ENCODE measurements at regions of chr17 and their contacts with region 1.

Region 1: DNA sequence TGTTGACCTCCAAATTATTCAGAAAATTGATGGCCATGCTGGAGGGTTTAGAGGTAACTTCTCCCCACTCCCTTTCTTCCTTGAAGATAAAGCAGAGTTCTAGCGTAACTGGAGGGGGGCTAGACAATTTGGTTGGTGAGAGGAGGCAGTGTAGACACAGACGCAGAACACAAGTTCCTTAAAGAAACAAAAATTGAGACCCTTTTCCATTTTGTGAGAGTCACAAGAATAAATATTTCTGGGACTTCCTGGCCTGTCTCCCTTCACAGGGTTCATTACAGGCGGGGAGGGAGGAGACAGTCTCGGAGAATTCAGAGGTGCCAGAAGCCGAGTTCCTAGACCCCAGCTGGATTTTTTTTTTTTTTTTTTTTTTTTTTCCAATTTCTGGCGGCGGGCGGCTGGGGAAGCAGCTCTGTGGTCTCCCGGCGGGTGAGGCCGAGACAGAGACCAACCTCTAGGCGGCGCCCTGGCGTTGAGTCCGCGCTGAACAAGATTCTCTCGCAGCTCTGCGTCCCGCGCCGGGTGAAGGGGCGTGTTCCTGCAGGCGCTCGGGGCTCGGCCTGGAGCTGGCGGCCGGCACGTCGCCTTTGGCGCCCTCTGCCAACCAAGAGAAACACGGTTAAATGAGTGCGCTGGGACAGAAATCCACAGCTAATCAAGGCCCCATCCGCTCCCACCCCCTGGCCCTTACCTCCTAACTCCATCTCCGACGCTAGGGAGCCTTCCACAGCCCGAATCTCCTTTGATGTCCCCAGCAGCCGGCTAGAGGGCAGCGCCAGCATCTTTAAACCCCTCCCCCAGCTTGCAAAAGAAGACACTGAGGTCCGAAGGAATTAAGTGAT is 10.2 kb upstream of the HOXB9 start:
- DNase-seq: peak; percentile 87
- ATAC-seq: peak; percentile 72
- H3K4me3 Mint-ChIP-seq: no peak overlapping the region
- H3K27ac Mint-ChIP-seq: no peak overlapping the region
- H3K4me1 Mint-ChIP-seq: peaks cover 34% of the 10 kb centered on the region
- H3K27me3 Mint-ChIP-seq: peaks cover 88% of the 10 kb centered on the region

Region 2: GRCh38 chr17:48492401-48493298 is 143.7 kb before region 1 on chr17:
- CTCF ChIA-PET with region 1: no interaction called
- DNase-seq: peak; percentile 76
- ATAC-seq: peak; percentile 95
- H3K4me3 Mint-ChIP-seq: peak overlapping the region; percentile 46
- H3K27ac Mint-ChIP-seq: peak overlapping the region; percentile 24
- H3K4me1 Mint-ChIP-seq: peaks cover 35% of the 10 kb centered on the region
- H3K27me3 Mint-ChIP-seq: peaks cover 16% of the 10 kb centered on the region

Region 3: GRCh38 chr17:48610282-48611211 is 25.9 kb before region 1 on chr17 and contains the start of gene HOXB7:
- CTCF ChIA-PET with region 1: interaction called, 21 read pairs
- DNase-seq: peak; percentile 81
- ATAC-seq: peak; percentile 54
- H3K4me3 Mint-ChIP-seq: peak within 1 kb of the TSS; percentile 81
- H3K27ac Mint-ChIP-seq: peak within 1 kb of the TSS; percentile 22
- H3K4me1 Mint-ChIP-seq: peaks cover 35% of the 10 kb centered on the region
- H3K27me3 Mint-ChIP-seq: peaks cover 79% of the 10 kb centered on the region
- total RNA-seq, gene HOXB7: 1.7 TPM

Region 4: DNA sequence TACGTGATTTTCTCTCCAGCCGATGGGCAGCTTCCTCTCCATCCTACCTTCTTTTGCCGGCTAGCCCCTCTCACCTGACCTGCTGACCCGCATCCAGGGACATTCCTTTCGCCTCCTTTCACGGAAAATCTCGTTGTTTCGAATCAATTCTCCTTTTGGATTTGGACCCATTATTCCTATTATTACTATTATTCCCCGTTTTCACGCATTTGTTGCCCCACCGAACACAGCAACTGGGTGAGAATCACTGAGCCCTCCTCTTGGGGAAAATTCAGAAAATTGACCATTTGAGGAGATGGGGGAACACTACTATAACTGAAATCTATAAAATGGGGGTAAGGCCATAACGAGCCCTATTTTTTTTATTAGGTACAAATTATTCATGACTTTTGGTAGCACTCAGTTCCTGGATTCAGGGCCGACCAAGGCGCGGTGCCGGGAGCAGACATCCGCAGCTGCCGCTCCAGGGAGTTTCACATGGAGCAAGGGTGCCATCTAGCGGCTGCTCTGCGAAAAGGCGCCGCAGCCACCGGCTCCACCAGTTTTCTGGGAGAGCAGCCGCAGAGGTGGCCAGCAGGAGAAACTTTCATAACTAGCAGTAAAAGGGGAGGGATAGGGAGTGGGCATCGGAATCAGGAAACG is 18.0 kb before region 1 on chr17:
- CTCF ChIA-PET with region 1: interaction called, 190 read pairs
- DNase-seq: peak; percentile 86
- ATAC-seq: peak; percentile 76
- H3K4me3 Mint-ChIP-seq: peak overlapping the region; percentile 31
- H3K27ac Mint-ChIP-seq: peak overlapping the region; percentile 36
- H3K4me1 Mint-ChIP-seq: peaks cover 34% of the 10 kb centered on the region
- H3K27me3 Mint-ChIP-seq: peaks cover 96% of the 10 kb centered on the region

Region 5: GRCh38 chr17:48646183-48647102 is 10.0 kb after region 1 on chr17:
- CTCF ChIA-PET with region 1: interaction called, 23 read pairs
- DNase-seq: peak; percentile 69
- ATAC-seq: peak; percentile 80
- H3K4me3 Mint-ChIP-seq: peak overlapping the region; percentile 89
- H3K27ac Mint-ChIP-seq: peak overlapping the region; percentile 87
- H3K4me1 Mint-ChIP-seq: peaks cover 55% of the 10 kb centered on the region
- H3K27me3 Mint-ChIP-seq: peaks cover 62% of the 10 kb centered on the region

Region 6: GRCh38 chr17:48663134-48663924 is 26.9 kb after region 1 on chr17:
- CTCF ChIA-PET with region 1: interaction called, 10 read pairs
- DNase-seq: no peak
- ATAC-seq: no peak
- H3K4me3 Mint-ChIP-seq: no peak overlapping the region
- H3K27ac Mint-ChIP-seq: no peak overlapping the region
- H3K4me1 Mint-ChIP-seq: no peaks in the 10 kb centered on the region
- H3K27me3 Mint-ChIP-seq: peaks cover 28% of the 10 kb centered on the region

Region 7: GRCh38 chr17:48985436-48986245 is 349.2 kb after region 1 on chr17:
- CTCF ChIA-PET with region 1: no interaction called
- DNase-seq: peak; percentile 35
- ATAC-seq: no peak
- H3K4me3 Mint-ChIP-seq: no peak overlapping the region
- H3K27ac Mint-ChIP-seq: no peak overlapping the region
- H3K4me1 Mint-ChIP-seq: no peaks in the 10 kb centered on the region
- H3K27me3 Mint-ChIP-seq: peaks cover 33% of the 10 kb centered on the region

Measured in activated CD8-positive, alpha-beta memory T cell treated with anti-CD3 and anti-CD28 coated beads, Interleukin-2, amount 10 ng/mL, durations not matched to agents 7 days and 5 days (primary cell).